Posterior vena cava (tissue), 2 donors: ENCODE measurements at regions of chr2 and their contacts with region 1.

Region 1: DNA sequence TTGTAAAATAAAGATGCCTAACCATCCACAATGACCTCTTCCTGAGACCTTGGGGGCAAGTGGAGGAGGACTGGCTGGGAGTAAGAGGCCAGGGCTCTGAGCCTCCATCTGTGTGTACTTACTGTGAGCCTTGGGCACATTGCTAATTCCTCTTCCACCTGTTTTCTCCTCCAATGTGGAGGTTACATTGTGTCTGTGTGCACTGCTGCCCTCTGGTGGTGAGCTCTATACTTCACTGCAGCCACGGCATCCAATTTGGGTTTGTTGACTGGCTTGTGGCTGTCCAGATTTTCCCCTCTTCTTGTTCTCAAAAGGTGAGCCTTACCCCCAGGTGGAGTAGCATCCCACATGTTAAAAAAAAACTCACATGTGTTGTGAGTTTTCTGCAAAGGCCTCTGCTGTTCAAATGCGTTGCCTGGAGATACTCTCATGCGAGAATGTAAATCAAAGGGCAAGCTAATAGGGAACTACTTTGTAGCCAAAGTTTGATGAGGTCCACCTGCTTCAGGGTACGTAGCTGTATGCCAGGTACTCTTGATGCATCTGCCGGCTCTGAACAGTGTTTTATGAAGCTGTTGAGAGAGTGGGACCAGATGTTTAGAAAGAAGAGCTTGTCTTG is 80.8 kb downstream of the APOB start:
- DNase-seq: peak; percentile 87

Region 2: DNA sequence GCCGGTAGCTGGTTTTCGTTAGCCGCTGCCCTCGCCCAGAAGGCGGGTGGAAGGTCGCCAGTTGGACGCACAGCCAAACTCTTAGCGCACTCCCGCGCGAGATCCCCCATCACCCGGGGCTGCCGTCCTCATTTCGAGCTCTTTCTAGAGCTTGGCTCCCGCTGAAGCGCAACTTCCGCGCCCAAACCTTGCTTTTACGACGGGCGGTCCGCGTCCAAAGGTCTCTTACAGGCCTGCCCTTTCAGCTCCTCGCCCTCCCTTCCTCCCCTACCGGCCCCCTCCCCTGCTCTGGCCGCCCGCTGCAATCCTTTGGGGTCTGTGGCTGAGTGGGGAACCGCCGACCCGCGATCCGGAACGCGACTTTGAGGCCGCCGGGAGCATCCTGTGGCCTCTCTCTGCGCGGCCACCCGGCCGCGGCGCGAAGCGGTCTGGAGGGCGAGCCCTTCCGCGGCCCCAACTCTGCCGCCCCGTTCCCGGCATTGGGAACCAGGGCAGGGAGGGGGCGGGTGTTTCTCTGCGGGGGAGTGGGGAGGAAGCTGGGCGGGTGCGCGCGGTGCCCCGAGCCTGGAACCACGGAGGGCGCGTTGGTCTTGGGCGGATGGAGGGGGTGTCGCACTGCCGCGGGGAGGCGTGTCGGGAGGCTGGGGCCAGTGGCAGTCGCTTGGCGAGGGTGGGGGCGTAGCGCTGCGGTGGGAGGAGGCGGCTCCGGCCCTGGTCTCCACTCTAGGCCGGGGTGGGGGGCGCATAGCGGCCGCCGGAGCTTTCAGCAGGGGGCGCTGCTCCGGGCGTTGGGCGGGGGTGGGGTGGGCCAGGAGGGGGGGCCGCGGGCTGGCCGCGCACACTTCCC is 296.5 kb before region 1 on chr2 and contains the start of gene GDF7:
- intact Hi-C with region 1: loop called (anchors 5 kb)
- DNase-seq: peak; percentile 88
- total RNA-seq, gene GDF7: 3.6 to 3.8 TPM

Region 3: DNA sequence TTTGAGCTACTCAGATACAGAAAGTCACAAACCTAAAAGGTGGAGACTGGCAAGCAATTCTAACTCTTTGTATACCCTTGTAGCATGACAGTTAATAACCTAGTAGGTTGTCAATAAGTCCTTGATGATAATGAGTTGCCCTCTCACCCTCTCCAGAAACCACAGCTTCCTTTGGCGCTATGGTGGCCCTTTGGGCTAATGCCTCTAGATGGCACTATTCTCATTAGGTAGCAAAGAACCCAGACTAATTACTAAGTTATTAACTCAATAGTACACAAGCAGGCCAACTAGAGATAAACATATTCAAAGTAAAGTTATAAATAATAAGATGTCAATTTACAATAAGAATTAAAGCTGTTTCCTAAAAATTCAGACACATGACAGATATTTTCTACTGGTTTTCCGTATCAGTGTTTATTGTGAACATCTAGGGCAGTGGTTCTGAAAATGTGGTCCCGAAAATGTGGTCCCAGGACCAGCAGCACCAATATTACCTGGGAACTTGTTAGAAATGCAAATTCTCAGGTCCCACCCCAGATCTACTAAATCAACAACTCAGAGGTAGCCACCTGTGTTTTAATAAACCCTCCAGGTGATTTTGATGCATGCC is 181.3 kb before region 1 on chr2:
- intact Hi-C with region 1: loop called in 1 of 2 experiments (anchors 5 kb)
- DNase-seq: no peak